Activated T-helper 1 cell treated with anti-CD3 and anti-CD28 coated beads, Interleukin-12 subunit alpha, Interleukin-12 subunit beta, Interleukin-2, Interleukin-4 antibody, amounts not matched to agents 30 ng/mL and 10 ng/mL and 1 ng/mL, durations not matched to agents 14 hours and 24 hours and 36 hours (primary cell): ENCODE measurements at regions of chr5 and their contacts with region 1.

Region 1: GRCh38 chr5:99025298-99026045 is 96.7 kb upstream of the CHD1 start:
- DNase-seq: no peak
- H3K4me3 Mint-ChIP-seq: no peak overlapping the region
- H3K27ac Mint-ChIP-seq: no peak overlapping the region
- H3K4me1 Mint-ChIP-seq: peaks cover 48% of the 10 kb centered on the region
- H3K27me3 Mint-ChIP-seq: peaks cover 3% of the 10 kb centered on the region

Region 2: GRCh38 chr5:97547999-97548738 is 1477.3 kb before region 1 on chr5:
- intact Hi-C with region 1: loop called (anchors 5 kb)
- DNase-seq: no peak
- H3K4me3 Mint-ChIP-seq: no peak overlapping the region
- H3K27ac Mint-ChIP-seq: no peak overlapping the region
- H3K4me1 Mint-ChIP-seq: peaks cover 18% of the 10 kb centered on the region
- H3K27me3 Mint-ChIP-seq: peaks cover 3% of the 10 kb centered on the region

Region 3: DNA sequence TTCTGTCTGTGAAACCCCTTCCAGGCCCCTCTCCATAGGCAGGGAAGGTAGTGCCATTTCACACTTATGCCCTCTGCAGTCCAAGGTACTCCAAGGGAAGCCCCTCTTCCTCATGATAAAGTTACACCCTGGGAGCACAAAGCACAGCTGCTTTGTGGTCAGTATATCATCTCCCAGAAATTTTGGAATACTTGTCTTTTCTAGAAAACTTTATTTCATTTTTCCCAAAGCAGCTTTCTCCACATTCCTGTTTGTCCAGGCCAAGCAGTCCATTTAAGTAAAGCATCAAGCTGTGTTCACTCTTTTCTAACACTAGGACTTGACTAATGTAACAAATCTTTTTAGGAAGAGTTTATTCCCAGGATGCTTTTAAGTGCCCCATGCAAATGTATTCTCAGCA is 623.8 kb before region 1 on chr5:
- intact Hi-C with region 1: no loop called
- DNase-seq: no peak
- H3K4me3 Mint-ChIP-seq: no peak overlapping the region
- H3K27ac Mint-ChIP-seq: no peak overlapping the region
- H3K4me1 Mint-ChIP-seq: no peaks in the 10 kb centered on the region
- H3K27me3 Mint-ChIP-seq: peaks cover 3% of the 10 kb centered on the region

Region 4: GRCh38 chr5:99045871-99046270 is 20.4 kb after region 1 on chr5:
- intact Hi-C with region 1: no loop called
- DNase-seq: no peak
- H3K4me3 Mint-ChIP-seq: no peak overlapping the region
- H3K27ac Mint-ChIP-seq: no peak overlapping the region
- H3K4me1 Mint-ChIP-seq: no peaks in the 10 kb centered on the region
- H3K27me3 Mint-ChIP-seq: peaks cover 5% of the 10 kb centered on the region

Region 5: DNA sequence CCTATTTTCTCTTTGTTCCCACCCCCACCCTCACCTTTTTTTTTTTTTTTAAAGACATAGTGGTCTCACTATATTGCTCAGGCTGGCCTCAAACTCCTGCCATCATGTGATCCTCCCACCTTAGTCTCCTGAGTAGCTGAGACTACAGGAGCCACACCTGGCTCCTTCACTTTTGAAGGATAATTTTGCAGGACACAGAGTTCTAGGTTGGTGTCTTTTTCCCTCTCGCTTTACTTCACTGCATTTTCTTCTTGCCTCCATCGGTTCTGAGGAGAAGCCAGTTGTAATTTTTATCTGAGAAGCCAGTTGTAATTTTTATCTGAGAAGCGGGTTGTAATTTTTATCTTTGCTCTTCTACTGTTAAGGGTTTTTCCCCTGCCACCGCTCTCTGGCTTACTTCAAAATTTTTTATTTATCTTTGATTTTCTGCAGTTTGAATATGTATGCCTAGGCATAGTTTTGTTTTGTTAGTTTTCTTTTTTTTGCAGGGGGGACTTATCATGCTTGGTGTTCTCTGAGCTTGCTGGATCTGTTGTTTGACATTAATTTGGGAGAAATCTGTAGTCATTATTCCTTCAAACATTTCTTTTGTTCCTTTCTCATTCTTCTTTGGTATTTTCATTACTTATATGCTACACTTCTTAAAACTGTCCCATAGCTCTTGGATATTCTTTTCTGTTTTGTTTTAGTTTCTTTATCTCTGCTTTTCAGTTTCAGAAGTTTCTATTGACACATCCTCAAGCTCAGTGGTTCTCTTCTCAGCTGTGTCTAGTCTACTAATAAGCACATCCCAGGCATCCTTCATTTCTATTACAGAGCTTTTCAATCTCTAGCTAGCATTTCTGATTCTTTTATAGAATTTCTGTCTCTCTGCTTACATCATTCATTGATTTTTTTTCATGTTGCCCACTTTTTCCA is 51.5 kb after region 1 on chr5:
- intact Hi-C with region 1: no loop called
- DNase-seq: no peak
- H3K4me3 Mint-ChIP-seq: no peak overlapping the region
- H3K27ac Mint-ChIP-seq: no peak overlapping the region
- H3K4me1 Mint-ChIP-seq: no peaks in the 10 kb centered on the region
- H3K27me3 Mint-ChIP-seq: peaks cover 1% of the 10 kb centered on the region